Endothelial cell of umbilical vein (primary cell): ENCODE measurements at regions of chr1 and their contacts with region 1.

Region 1: GRCh38 chr1:93814059-93814794 is 64.8 kb downstream of the DNTTIP2 start:
- DNase-seq: peak; percentile 89
- H3K4me3 ChIP-seq: no peak overlapping the region
- H3K27ac ChIP-seq: no peak overlapping the region
- H3K4me1 ChIP-seq: peaks cover 39% of the 10 kb centered on the region
- H3K27me3 ChIP-seq: no peaks in the 10 kb centered on the region
- CTCF ChIP-seq: peak; percentile 89 to 97
- POLR2A ChIP-seq: no peak

Region 2: DNA sequence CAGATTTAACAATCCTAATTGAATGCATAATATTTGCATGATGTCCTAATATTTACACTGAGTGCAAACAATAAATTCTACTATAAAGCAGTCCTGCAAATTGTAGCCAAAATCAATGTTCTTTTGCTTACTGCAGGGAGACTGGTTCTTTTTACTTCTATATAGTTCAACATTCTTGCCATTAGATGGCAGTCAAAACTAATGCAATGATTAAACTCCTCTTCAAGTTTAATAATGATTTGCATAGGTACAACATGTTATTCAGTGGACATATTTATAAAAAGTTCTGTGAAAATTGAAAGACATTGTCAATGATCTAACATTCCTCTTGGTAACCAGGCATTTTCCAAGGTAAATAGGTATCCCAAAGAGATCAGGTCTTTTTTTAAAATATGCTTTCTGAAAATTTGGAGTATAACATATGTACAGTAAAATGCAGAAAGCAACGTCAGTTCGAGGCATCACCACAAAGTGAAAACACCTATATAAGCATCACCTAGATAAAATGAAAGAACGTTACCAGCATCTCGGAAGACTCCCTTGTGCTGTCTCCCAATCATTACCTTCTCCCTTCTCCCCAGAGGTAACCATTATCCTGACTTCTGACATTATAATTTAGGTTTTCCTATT is 376.1 kb before region 1 on chr1:
- CTCF ChIA-PET with region 1: interaction called, 15 read pairs
- POLR2A ChIA-PET with region 1: no interaction called
- dilution Hi-C with region 1: no loop called
- intact Hi-C with region 1: loop called (anchors 1 kb)
- DNase-seq: peak; percentile 69
- H3K4me3 ChIP-seq: no peak overlapping the region
- H3K27ac ChIP-seq: no peak overlapping the region
- H3K4me1 ChIP-seq: no peaks in the 10 kb centered on the region
- H3K27me3 ChIP-seq: peaks cover 0 to 12% of the 10 kb centered on the region in 2 experiments
- CTCF ChIP-seq: peak; percentile 26 to 29
- POLR2A ChIP-seq: no peak

Region 3: GRCh38 chr1:93607814-93608186 is 206.4 kb before region 1 on chr1:
- CTCF ChIA-PET with region 1: interaction called, 10 read pairs
- POLR2A ChIA-PET with region 1: no interaction called
- dilution Hi-C with region 1: no loop called
- intact Hi-C with region 1: no loop called
- DNase-seq: no peak
- H3K4me3 ChIP-seq: no peak overlapping the region
- H3K27ac ChIP-seq: no peak overlapping the region
- H3K4me1 ChIP-seq: peaks cover 42% of the 10 kb centered on the region
- H3K27me3 ChIP-seq: no peaks in the 10 kb centered on the region
- CTCF ChIP-seq: no peak
- POLR2A ChIP-seq: no peak

Region 4: GRCh38 chr1:93672069-93672468 is 142.2 kb before region 1 on chr1:
- CTCF ChIA-PET with region 1: interaction called, 122 read pairs
- POLR2A ChIA-PET with region 1: no interaction called
- dilution Hi-C with region 1: loop called (anchors 25 kb)
- intact Hi-C with region 1: loop called (anchors 2 kb)
- DNase-seq: peak; percentile 98
- H3K4me3 ChIP-seq: no peak overlapping the region
- H3K27ac ChIP-seq: peak overlapping the region; percentile 92
- H3K4me1 ChIP-seq: peaks cover 86% of the 10 kb centered on the region
- H3K27me3 ChIP-seq: no peaks in the 10 kb centered on the region
- CTCF ChIP-seq: no peak
- POLR2A ChIP-seq: peak; percentile 51

Region 5: DNA sequence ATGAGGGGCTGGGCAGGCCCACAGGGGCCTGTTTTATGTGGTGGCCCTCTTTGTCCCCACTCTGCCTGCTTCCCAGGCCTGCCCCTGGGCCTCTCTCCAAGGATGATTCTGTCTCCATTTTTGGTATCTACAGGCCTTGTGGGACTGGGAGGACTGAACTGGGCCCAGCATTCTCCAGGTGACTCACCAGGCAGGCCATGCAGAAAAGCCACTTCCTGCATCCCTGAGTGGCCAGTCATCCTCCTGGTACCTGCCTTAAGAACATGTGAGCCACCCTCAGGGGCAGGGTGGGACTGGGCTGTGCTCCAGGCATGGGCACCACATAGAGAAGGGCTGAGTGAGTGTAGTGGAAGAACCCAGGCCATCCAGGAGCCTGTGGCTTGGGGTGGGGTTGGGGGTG is 112.6 kb before region 1 on chr1:
- CTCF ChIA-PET with region 1: interaction called, 12 read pairs
- POLR2A ChIA-PET with region 1: no interaction called
- dilution Hi-C with region 1: no loop called
- intact Hi-C with region 1: no loop called
- DNase-seq: peak; percentile 55
- H3K4me3 ChIP-seq: no peak overlapping the region
- H3K27ac ChIP-seq: peak overlapping the region; percentile 25
- H3K4me1 ChIP-seq: peaks cover 9% of the 10 kb centered on the region
- H3K27me3 ChIP-seq: no peaks in the 10 kb centered on the region
- CTCF ChIP-seq: no peak
- POLR2A ChIP-seq: no peak

Region 6: DNA sequence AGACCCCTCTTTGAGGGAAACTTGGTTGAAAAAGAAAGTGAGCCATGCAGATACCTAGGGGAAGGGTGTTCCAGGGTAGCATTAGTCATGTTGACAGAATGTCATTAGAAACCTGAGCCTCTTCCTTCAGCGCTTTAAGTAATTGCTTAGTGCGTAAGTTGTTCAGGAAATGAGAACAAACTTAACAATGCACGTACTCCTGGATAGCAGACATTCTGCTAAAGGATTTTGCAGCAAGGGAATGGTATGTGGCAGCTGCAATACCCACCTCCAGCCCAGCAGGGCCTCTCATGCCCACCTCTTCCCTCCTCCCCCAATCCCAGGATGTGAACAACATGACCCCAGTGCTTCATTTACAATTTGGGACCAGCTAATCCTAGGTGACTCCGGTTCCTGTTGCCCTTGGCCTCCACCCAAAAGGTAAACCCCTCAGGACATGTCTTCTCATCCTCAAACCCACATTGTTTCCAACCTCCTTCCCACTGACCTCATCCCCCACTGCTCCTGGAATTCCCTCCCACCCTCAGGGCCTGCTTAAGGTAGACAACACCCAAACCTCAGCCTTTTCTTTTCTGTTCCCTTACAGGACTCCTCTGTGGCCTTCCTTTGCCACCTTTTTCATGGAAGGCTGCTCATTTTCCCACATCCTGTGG is 34.6 kb before region 1 on chr1:
- CTCF ChIA-PET with region 1: interaction called, 6 read pairs
- POLR2A ChIA-PET with region 1: no interaction called
- dilution Hi-C with region 1: no loop called
- intact Hi-C with region 1: loop called (anchors 1 kb)
- DNase-seq: peak; percentile 84
- H3K4me3 ChIP-seq: no peak overlapping the region
- H3K27ac ChIP-seq: peak overlapping the region; percentile 93
- H3K4me1 ChIP-seq: peaks cover 17% of the 10 kb centered on the region
- H3K27me3 ChIP-seq: no peaks in the 10 kb centered on the region
- CTCF ChIP-seq: peak in 1 of 2 donors; percentile 19
- POLR2A ChIP-seq: no peak